SK-N-SH (cell line): ENCODE measurements at regions of chr20 and their contacts with region 1.

Region 1: DNA sequence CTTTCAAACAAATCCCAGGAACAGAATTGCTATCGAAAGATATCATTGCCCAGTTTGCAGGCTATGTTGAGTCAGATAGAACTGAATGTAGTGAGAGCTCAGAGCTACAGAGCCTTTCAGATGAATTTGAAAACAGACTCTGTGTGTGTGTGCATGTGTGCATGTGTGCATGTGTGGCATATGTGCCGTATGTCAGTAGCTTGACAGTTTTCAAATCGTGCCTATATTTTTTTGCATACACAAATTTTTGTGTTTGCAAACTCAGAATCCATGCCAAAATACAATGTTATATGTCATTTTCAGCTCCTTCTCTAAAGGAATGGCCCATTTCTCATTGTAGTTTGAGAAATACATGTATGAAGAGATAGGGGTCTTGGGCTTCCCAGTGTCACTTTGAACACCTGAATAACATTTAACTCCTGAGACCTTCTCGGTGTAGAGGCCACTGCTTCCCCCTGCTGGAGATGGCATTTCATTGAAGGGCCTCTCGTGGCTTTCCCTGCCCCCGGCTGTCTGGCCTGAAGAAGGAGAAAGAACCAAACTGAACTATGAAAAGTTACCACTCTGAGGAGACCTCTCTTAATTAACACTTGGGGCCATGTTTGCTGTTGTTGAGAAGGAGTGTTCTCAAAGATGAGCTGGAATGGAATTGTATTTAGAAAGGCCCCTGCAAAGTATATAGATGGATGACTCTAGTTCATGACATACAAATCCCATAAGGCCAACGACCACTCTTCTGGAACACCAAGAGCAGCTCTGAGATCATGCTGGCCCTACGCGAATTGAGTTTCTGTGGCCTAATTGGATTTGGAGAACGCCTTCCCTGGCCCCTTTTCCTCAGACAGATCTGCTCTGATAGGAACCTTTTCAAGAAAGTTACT is 58.7 kb downstream of the VAPB start:
- DNase-seq: no peak
- H3K4me3 ChIP-seq: no peak overlapping the region
- H3K27ac ChIP-seq: no peak overlapping the region; a peak in 1 of 4 replicates
- H3K4me1 ChIP-seq: peaks cover 4 to 42% of the 10 kb centered on the region in 2 experiments; a peak in 3 of 4 replicates
- H3K27me3 ChIP-seq: no peaks in the 10 kb centered on the region
- CTCF ChIP-seq: peak; percentile 74
- EP300 ChIP-seq: no peak
- RAD21 ChIP-seq: peak; percentile 77

Region 2: GRCh38 chr20:58236612-58237330 is 211.0 kb before region 1 on chr20:
- CTCF ChIA-PET with region 1: interaction called, 29 read pairs
- POLR2A ChIA-PET with region 1: no interaction called
- DNase-seq: peak; percentile 89
- H3K4me3 ChIP-seq: peak overlapping the region; percentile 40 to 67
- H3K27ac ChIP-seq: peak overlapping the region; percentile 74 to 92
- H3K4me1 ChIP-seq: peaks cover 12 to 15% of the 10 kb centered on the region in 2 experiments; a peak in 3 of 4 replicates
- H3K27me3 ChIP-seq: no peaks in the 10 kb centered on the region
- CTCF ChIP-seq: peak; percentile 97
- EP300 ChIP-seq: no peak
- RAD21 ChIP-seq: peak; percentile 90

Region 3: GRCh38 chr20:58246346-58246745 is 201.4 kb before region 1 on chr20:
- CTCF ChIA-PET with region 1: interaction called, 17 read pairs
- POLR2A ChIA-PET with region 1: interaction called, 4 read pairs
- DNase-seq: no peak
- H3K4me3 ChIP-seq: no peak overlapping the region
- H3K27ac ChIP-seq: no peak overlapping the region
- H3K4me1 ChIP-seq: peaks cover 0 to 5% of the 10 kb centered on the region in 2 experiments; a peak in 1 of 4 replicates
- H3K27me3 ChIP-seq: no peaks in the 10 kb centered on the region
- CTCF ChIP-seq: peak; percentile 48
- EP300 ChIP-seq: no peak
- RAD21 ChIP-seq: peak; percentile 53

Region 4: GRCh38 chr20:58312836-58313235 is 134.9 kb before region 1 on chr20:
- CTCF ChIA-PET with region 1: no interaction called
- POLR2A ChIA-PET with region 1: no interaction called
- DNase-seq: no peak
- H3K4me3 ChIP-seq: no peak overlapping the region
- H3K27ac ChIP-seq: no peak overlapping the region
- H3K4me1 ChIP-seq: peaks cover 4 to 7% of the 10 kb centered on the region in 2 experiments; a peak in 3 of 4 replicates
- H3K27me3 ChIP-seq: no peaks in the 10 kb centered on the region
- CTCF ChIP-seq: no peak
- EP300 ChIP-seq: no peak
- RAD21 ChIP-seq: no peak

Region 5: GRCh38 chr20:58375792-58376352 is 71.9 kb before region 1 on chr20:
- CTCF ChIA-PET with region 1: no interaction called
- POLR2A ChIA-PET with region 1: no interaction called
- DNase-seq: no peak
- H3K4me3 ChIP-seq: no peak overlapping the region
- H3K27ac ChIP-seq: no peak overlapping the region
- H3K4me1 ChIP-seq: peaks cover 0 to 3% of the 10 kb centered on the region in 2 experiments; a peak in 1 of 4 replicates
- H3K27me3 ChIP-seq: no peaks in the 10 kb centered on the region
- CTCF ChIP-seq: no peak
- EP300 ChIP-seq: no peak
- RAD21 ChIP-seq: no peak

Region 6: DNA sequence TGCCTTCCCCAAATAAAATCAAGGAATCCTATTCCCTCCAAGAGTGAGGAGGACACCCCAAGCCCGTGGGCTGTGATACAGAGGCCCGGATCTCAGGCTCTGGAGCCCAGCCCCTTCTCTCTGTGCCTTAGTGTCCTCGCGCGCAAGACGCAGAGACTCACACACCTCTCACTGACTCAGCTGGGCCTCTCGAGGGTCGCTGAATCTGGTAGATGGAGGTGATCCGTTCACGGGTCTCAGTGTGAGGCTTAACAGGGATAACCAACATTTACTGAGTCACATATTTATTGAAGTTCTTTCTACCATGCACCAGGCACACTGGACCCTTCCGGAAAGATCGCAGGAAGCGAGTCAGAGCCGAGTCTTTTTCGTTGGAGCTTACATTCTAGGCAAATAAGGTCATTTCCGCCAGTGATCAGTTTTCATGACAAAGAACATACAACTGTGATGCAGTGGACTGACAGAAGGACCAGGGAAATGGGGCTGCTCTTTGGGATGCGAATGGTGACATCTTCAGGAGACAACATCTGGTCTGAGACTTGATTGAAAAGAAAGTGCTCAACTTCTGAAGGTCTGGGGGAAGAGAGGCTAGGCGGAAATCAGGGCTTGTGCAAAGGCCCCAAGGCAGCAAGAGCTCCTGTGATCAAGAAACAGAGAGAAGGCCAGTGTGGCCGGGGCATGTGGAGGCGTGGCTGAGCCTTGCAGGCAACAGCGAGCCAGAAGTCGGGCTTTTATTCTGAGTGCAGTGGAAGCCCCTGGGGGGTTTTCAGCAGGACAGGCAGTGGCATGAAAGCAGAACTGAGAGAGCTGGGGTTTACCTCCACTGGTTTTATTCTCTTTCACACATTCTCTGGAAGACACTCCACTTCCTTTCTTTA is 10.7 kb after region 1 on chr20:
- CTCF ChIA-PET with region 1: interaction called, 24 read pairs
- POLR2A ChIA-PET with region 1: no interaction called
- DNase-seq: no peak
- H3K4me3 ChIP-seq: no peak overlapping the region
- H3K27ac ChIP-seq: peak overlapping the region; percentile 58 to 78; a peak in 3 of 4 replicates
- H3K4me1 ChIP-seq: peaks cover 23 to 31% of the 10 kb centered on the region in 2 experiments; a peak in 3 of 4 replicates
- H3K27me3 ChIP-seq: no peaks in the 10 kb centered on the region
- CTCF ChIP-seq: no peak
- EP300 ChIP-seq: peak in 1 of 2 experiments; percentile 12; a peak in 1 of 4 replicates
- RAD21 ChIP-seq: no peak

Region 7: DNA sequence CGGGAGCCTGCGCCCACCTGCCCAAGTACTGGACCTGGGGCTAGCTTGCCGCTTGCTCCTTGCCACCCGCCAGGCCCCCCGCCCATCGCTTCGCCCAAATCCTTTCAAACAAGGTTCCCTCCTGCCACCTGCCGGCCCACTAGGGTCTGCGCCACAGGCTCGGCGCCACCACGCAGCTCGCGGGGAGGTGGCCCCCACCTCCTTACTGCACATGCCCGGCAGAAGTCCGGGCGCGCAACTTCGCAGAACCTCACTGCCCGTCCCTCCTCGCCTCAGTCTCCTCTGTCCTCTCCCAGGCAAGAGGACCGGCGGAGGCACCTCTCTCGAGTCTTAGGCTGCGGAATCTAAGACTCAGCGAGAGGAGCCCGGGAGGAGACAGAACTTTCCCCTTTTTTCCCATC is 391.7 kb after region 1 on chr20:
- CTCF ChIA-PET with region 1: interaction called, 18 read pairs
- POLR2A ChIA-PET with region 1: no interaction called
- DNase-seq: peak; percentile 85
- H3K4me3 ChIP-seq: peak overlapping the region; percentile 42 to 59
- H3K27ac ChIP-seq: no peak overlapping the region
- H3K4me1 ChIP-seq: no peaks in the 10 kb centered on the region; a peak in 1 of 4 replicates
- H3K27me3 ChIP-seq: peaks cover 9% of the 10 kb centered on the region; the same call in 1 of the 2 replicates
- CTCF ChIP-seq: peak; percentile 62
- EP300 ChIP-seq: no peak
- RAD21 ChIP-seq: peak; percentile 66